Posterior cingulate gyrus (tissue), 11 donors: ENCODE measurements at regions of chr6 and their contacts with region 1.

Region 1: DNA sequence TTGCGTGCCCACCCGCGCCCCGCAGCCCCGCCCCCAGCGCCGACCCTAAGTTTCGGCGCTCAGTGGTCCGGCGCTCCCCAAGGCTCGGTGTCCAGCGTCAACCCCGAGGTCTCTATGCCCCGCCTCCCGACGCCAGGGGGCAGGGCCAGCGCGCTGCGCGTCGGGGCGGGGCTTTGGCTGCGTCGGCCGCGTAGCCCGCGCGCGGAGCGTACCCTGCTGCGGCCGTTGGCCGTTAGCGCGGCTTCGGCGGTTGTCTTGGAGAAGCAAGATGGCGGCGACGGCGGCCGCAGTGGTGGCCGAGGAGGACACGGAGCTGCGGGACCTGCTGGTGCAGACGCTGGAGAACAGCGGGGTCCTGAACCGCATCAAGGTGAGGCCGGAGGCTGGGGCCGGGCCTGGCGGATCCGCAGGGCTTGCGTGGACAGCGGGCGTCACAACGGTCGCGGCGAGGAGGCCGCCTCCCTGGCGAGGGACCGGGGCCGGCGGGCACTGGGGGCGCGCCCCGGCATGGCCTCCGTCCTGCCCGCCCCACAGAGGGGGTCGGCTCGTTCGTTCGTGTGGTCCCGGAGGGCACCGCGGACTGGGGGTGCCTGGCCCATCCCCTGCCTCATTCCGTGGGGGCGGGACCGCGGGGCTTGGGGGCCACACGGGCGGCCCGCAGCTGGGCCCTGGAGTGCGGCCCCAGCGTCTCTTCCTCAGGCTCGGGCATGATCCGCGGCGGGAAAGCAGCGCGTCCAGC is at the start of gene CEP43:
- DNase-seq: peak; percentile 80 to 99 (median 92)

Region 2: DNA sequence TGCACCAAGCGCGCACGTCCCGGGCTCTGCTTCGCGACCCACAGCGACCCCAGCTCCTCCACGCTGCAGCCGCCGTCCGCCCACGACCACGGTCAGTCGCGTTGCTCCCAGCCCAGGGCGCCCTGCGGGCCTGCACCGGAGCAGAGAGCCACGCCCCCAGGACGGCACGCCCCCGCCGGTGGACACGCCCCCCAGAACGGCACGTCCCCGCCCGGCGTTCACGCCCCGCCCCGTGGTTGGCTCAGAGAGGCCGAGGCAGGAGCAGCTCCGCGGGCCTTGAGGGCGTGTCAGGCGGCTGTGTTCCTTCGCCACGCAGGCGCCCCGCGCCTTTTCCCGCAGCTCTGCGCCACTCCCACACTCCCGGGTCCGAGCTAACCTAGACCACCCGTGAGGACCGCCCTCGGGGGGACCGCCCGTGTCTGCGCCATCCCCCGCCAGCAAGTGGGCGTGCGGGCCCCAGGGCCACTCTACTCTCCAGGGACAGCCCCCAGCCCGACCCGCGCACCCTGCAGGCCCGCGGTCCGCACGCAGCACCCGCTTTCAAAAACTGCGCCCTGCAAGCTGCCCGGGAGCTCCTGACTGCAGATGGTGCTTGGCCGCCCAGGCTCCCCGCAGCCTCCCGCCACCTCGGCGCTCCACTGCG is 42.7 kb before region 1 on chr6 and contains the start of gene RNASET2:
- intact Hi-C with region 1: loop called (anchors 5 kb)
- DNase-seq: peak; percentile 89 to 99 (median 94)

Region 3: GRCh38 chr6:167141667-167142432 is 142.5 kb after region 1 on chr6:
- intact Hi-C with region 1: loop called (anchors 5 kb)
- DNase-seq: peak in 7 of 10 donors; percentile 27 to 95 (median 59)